Dendritic cell treated with granulocyte-macrophage colony-stimulating factor and Interleukin-4, amounts not matched to agents 40 ng/mL and 50 ng/mL, for 4 days (primary cell): ENCODE measurements at regions of chr3 and their contacts with region 1.

Region 1: DNA sequence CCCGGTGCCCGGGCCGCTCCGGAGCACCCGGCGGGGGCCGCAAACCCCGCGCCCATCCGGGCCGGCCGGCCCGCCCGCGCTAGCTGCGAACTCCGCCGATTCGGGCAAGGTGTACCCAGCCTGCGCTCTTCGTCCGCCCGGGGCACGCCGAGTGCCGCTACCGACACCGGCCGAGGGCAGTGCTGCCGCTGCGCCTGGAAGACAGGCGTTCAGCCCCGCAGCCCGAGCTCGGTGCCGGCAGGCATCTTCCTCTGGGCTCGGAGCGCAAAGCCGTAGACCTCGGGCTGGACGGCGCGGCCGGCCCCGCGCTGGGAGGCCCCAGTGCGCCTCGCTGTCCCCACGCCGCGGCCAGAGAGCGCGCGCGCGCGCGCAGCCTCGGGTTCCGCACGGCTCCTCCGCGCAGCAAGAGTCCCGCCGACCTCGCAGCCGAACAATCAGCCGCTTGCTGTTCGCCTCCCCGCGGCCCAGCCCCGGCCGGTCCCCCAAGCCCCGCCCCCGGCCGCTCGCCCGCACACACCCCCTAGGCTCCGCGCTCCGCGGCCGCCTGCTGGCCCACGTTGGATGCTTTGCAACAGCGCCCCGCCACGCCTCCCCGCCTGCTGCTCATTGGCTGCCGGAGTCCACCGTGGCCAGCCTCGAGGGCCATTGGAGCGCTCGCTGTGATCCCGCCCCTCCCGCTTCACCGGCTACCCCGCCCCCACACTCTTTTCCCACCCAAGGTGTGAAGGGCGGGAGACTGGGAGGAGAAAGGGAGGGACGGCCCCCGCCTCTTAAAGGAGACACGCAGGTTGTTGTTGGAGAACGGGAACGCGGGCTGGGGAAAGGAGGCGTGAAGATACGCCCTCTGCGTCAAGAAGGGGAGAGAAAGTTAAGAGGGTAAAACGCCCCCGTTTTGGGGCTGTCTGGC is at the start of gene LRIG1:
- H3K4me3 Mint-ChIP-seq: peak within 1 kb of the TSS; percentile 82
- H3K27ac Mint-ChIP-seq: peak within 1 kb of the TSS; percentile 71
- H3K4me1 Mint-ChIP-seq: peaks cover 26% of the 10 kb centered on the region
- H3K27me3 Mint-ChIP-seq: peaks cover 39% of the 10 kb centered on the region

Region 2: GRCh38 chr3:66220602-66221377 is 280.0 kb before region 1 on chr3 and contains the start of gene SLC25A26:
- intact Hi-C with region 1: loop called (anchors 5 kb)
- H3K4me3 Mint-ChIP-seq: peak within 1 kb of the TSS; percentile 92
- H3K27ac Mint-ChIP-seq: peak within 1 kb of the TSS; percentile 85
- H3K4me1 Mint-ChIP-seq: peaks cover 29% of the 10 kb centered on the region
- H3K27me3 Mint-ChIP-seq: peaks cover 6% of the 10 kb centered on the region

Region 3: GRCh38 chr3:66644549-66644948 is 143.7 kb after region 1 on chr3:
- intact Hi-C with region 1: loop called (anchors 10 kb)
- H3K4me3 Mint-ChIP-seq: no peak overlapping the region
- H3K27ac Mint-ChIP-seq: peak overlapping the region; percentile 41
- H3K4me1 Mint-ChIP-seq: peaks cover 20% of the 10 kb centered on the region
- H3K27me3 Mint-ChIP-seq: peaks cover 3% of the 10 kb centered on the region

Region 4: DNA sequence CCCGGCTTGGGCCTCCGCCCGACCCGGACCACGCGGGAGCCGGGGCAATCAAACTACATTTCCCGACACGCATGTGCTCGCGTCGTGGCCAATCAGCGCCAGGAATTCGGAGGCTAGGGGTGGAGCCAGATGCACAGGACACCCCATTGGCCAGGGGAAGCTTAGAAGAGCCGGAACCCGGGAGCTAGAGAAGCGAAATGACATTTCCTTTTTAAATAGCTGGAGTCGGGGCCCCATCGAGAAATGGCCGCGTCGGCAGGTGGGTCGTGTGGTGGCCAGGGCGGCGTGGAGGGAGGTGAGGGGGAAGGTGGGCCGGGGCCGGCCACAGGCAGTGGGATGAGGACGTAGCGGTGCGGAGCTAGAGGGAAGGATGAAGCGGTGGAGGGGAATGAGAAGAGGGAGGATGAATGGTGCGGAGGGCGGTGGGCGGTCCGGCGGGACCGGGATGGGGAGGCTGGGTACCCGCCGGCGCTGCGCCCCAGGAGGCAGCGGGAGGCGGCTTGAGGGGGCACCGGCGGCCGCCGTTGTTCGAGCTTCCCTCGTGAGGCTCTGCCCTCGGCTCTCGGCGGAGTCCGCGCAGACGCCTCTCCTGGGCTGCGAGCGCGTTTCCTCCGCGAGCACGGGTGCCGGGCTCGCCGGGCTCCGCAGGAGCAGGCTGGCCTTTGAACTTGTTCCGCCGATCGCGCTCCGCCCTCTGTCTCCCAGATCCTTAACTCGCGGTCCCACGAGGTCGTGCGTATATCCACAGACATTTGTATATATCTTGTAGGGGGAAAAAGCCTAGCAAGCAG is 497.5 kb after region 1 on chr3 and contains the start of gene KBTBD8:
- intact Hi-C with region 1: loop called (anchors 5 kb)
- H3K4me3 Mint-ChIP-seq: peak within 1 kb of the TSS; percentile 87
- H3K27ac Mint-ChIP-seq: peak within 1 kb of the TSS; percentile 85
- H3K4me1 Mint-ChIP-seq: peaks cover 9% of the 10 kb centered on the region
- H3K27me3 Mint-ChIP-seq: peaks cover 3% of the 10 kb centered on the region